ENCODE measurements at regions of chr2 and their contacts with region 1.

Region 1: GRCh38 chr2:33033606-33034081 is 86.9 kb downstream of the LTBP1 start:
- DNase-seq: peak; percentile 45
- H3K4me3 Mint-ChIP-seq: no peak overlapping the region
- H3K27ac Mint-ChIP-seq: no peak overlapping the region
- H3K4me1 Mint-ChIP-seq: no peaks in the 10 kb centered on the region
- H3K27me3 Mint-ChIP-seq: no peaks in the 10 kb centered on the region
- CTCF ChIP-seq: peak; percentile 62

Region 2: DNA sequence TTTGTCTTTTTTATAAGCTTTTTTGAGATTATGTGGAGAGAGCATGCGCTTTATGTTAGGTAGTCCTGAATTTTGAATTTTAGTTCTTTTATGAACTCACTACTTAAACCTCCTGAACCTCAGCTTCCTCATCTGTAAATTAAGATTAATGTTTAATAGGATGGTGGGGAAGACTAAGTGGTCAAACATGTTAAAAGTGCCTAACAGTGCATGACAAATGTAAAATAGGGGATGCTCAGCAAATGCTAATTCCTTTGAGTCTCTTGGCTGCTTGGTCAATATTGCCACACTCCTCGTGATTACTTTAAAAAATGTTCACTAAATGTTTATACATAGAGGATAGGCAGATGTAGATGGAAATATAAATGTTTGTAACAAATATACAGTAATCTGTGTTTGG is 670.0 kb before region 1 on chr2:
- CTCF ChIA-PET with region 1: no interaction called
- POLR2A ChIA-PET with region 1: no interaction called
- intact Hi-C with region 1: no loop called
- DNase-seq: no peak
- H3K4me3 Mint-ChIP-seq: no peak overlapping the region
- H3K27ac Mint-ChIP-seq: peak overlapping the region; percentile 55
- H3K4me1 Mint-ChIP-seq: peaks cover 38% of the 10 kb centered on the region
- H3K27me3 Mint-ChIP-seq: no peaks in the 10 kb centered on the region
- CTCF ChIP-seq: no peak

Region 3: DNA sequence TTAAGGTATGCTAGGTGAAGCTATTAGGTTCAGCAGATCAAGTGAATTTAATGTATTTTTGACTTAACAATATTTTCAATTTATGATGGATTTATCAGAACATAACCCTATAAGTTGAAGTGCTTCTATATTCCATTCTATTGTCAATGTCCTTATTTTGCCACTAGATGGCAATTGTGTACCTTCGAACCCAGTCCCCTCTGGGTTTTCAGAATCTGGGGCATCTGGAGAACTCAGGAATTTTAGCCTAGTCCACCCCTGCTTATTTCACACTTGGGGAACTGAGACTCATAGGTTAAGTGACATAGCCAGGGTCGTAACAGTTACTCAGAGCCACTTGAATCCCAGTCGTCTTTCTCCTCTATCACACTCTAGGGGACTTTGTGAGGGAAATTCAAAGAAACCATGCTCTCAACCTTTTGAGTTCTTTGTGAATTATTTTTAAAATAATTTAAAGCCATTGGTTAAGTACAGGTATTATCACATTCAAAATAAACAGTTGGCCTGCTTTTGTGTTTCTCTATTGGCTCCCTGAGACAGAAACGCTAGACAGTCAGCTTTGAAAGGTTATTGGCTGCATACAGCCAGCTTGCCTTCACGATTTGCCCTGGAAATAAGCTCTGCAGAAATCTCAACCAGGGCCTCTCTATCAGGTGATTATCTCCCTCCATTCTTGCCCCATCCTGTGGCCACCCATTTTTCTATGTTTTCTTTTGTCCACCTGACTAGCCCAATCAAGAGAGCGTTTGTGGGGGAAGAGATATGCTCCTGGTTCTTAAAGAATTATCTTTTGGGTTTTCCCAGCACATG is 260.8 kb before region 1 on chr2:
- CTCF ChIA-PET with region 1: interaction called, 92 read pairs
- POLR2A ChIA-PET with region 1: interaction called, 8 read pairs
- intact Hi-C with region 1: loop called (anchors 1 kb)
- DNase-seq: peak; percentile 59
- H3K4me3 Mint-ChIP-seq: no peak overlapping the region
- H3K27ac Mint-ChIP-seq: no peak overlapping the region
- H3K4me1 Mint-ChIP-seq: no peaks in the 10 kb centered on the region
- H3K27me3 Mint-ChIP-seq: no peaks in the 10 kb centered on the region
- CTCF ChIP-seq: peak; percentile 82

Region 4: DNA sequence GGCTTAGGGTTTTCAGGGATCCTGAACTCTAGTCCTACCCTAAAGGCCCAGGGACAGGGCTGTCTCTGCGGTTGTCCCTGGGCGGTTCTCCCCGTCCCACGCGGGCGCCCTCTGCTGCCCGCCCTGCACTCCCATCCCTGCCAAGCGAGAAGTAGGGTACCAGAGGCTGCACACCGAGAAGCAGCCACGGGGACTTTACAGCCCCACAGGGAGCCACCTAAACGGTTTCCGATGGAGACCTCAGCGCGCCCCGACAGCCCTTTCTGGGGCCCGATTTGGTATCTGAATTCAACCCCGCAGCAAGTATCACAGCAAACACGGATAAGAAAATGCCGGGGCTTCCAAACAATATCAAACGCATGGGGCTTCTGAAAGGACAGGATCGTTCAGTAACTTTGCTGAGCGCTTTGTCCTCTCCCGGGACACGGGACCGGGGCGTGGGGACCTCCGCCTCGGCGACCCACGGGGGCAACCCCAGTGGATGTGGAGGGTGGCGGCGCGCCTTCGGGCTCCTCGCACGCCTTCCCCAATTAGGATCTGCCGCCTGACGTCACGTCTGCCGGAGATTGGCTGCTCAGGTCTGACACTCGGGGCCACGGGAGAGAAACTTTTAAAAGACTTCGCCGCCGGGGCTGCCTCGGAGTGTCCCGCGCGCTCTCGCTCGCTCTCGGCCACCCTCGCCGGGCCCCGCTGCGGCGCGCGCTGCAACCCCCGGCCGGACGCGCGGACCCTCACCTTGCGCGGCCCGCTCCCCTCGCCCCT is 87.1 kb before region 1 on chr2 and contains the start of gene LTBP1:
- CTCF ChIA-PET with region 1: interaction called, 11 read pairs
- POLR2A ChIA-PET with region 1: no interaction called
- intact Hi-C with region 1: loop called (anchors 1 kb)
- DNase-seq: peak; percentile 65
- H3K4me3 Mint-ChIP-seq: peak within 1 kb of the TSS; percentile 70
- H3K27ac Mint-ChIP-seq: no peak within 1 kb of the TSS
- H3K4me1 Mint-ChIP-seq: no peaks in the 10 kb centered on the region
- H3K27me3 Mint-ChIP-seq: no peaks in the 10 kb centered on the region
- CTCF ChIP-seq: peak; percentile 71
- total RNA-seq, gene LTBP1: 99.0 and 119 TPM in 2 replicates

Region 5: DNA sequence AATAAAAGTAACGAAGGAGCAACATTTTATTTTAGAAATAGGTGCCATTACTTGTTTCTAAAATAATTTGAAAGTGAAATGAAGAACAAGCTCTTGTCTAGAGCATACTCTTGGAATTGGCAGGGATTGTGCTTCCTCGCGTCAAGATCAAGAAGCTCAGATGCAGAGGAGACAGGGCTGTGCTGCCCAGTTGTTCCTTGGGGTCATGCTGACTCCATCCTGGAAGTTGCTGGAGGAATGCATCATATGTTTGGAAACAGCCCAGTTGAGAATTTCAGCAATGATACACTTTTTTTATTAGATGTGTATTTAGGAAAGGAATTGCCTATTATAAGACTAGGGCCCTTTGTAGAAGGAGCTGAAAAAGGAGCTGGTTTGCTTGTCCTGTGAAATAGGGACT is 69.7 kb before region 1 on chr2:
- CTCF ChIA-PET with region 1: no interaction called
- POLR2A ChIA-PET with region 1: no interaction called
- intact Hi-C with region 1: no loop called
- DNase-seq: no peak
- H3K4me3 Mint-ChIP-seq: no peak overlapping the region
- H3K27ac Mint-ChIP-seq: no peak overlapping the region
- H3K4me1 Mint-ChIP-seq: no peaks in the 10 kb centered on the region
- H3K27me3 Mint-ChIP-seq: no peaks in the 10 kb centered on the region
- CTCF ChIP-seq: no peak

Region 6: DNA sequence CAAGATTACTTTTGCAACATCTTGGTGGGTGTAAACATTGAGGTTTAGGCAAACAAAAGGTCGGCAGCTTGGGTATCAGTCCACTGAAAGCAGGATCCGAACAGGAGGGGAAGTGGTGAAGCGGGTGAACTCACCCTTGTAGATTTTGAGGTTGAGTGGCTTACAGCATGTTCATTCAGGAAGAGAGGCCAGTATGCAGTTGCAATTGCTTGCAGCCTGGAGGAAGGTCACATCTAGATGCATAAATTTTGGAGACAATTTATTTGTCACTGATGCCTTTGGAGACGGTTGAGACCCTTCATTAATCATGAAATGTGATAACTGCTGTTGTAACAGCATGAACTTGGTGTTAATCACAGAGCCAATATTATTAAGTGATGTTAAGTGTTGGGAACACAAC is 44.2 kb after region 1 on chr2:
- CTCF ChIA-PET with region 1: interaction called, 10 read pairs
- POLR2A ChIA-PET with region 1: no interaction called
- intact Hi-C with region 1: no loop called
- DNase-seq: no peak
- H3K4me3 Mint-ChIP-seq: no peak overlapping the region
- H3K27ac Mint-ChIP-seq: no peak overlapping the region
- H3K4me1 Mint-ChIP-seq: peaks cover 4% of the 10 kb centered on the region
- H3K27me3 Mint-ChIP-seq: no peaks in the 10 kb centered on the region
- CTCF ChIP-seq: no peak

Region 7: GRCh38 chr2:33145459-33145858 is 111.8 kb after region 1 on chr2:
- CTCF ChIA-PET with region 1: no interaction called
- POLR2A ChIA-PET with region 1: no interaction called
- intact Hi-C with region 1: no loop called
- DNase-seq: no peak
- H3K4me3 Mint-ChIP-seq: no peak overlapping the region
- H3K27ac Mint-ChIP-seq: no peak overlapping the region
- H3K4me1 Mint-ChIP-seq: peaks cover 28% of the 10 kb centered on the region
- H3K27me3 Mint-ChIP-seq: no peaks in the 10 kb centered on the region
- CTCF ChIP-seq: no peak

Region 8: DNA sequence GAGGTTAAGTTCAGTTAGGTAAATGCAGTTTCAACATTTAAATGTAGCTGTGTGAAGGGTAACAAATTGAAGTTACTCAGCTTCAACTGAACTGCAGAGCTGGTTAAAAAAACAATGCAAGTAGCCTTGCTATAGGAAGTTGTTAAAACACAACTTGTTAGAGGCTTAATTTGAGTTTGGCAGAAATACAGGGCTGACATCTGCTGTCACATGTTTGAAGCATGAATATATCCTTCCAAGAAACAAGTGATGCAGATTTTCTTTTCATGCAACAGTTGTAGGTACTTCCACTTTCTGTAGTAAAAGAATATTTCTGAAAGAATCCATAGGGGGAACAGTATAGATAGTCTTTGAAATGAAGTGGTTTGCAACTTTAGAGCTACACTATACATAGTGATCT is 234.1 kb after region 1 on chr2:
- CTCF ChIA-PET with region 1: interaction called, 55 read pairs
- POLR2A ChIA-PET with region 1: interaction called, 4 read pairs
- intact Hi-C with region 1: loop called (anchors 1 kb)
- DNase-seq: no peak
- H3K4me3 Mint-ChIP-seq: no peak overlapping the region
- H3K27ac Mint-ChIP-seq: no peak overlapping the region
- H3K4me1 Mint-ChIP-seq: peaks cover 6% of the 10 kb centered on the region
- H3K27me3 Mint-ChIP-seq: no peaks in the 10 kb centered on the region
- CTCF ChIP-seq: no peak

Region 9: DNA sequence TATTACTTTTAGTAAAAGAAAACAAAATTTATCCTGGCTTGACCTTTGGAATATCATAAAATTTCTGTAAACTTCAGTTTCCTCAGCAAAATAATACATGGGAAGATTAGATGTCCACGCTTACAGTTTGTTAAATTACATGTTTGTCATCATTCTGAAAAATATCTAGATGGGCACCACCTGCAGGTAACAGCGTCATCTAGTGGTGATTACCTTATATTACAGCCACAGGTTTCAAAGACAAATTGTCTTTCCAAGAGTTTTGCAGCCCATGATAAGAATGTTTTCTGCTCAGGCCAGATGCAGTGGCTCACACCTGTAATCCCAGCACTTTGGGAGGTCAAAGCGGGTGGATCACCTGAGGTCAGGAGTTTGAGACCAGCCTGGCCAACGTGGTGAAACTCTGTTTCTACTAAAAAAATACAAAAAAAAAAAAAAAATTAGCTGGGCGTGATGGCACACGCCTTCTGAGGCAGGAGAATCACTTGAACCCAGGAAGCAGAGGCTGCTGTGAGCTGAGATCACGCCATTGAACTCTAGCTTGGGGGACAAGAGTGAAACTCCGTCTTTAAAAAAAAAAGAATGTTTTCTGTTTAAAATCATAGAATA is 346.5 kb after region 1 on chr2:
- CTCF ChIA-PET with region 1: interaction called, 11 read pairs
- POLR2A ChIA-PET with region 1: no interaction called
- intact Hi-C with region 1: no loop called
- DNase-seq: peak; percentile 18
- H3K4me3 Mint-ChIP-seq: no peak overlapping the region
- H3K27ac Mint-ChIP-seq: no peak overlapping the region
- H3K4me1 Mint-ChIP-seq: no peaks in the 10 kb centered on the region
- H3K27me3 Mint-ChIP-seq: no peaks in the 10 kb centered on the region
- CTCF ChIP-seq: peak; percentile 82